Caco-2 (cell line): ENCODE measurements at regions of chr10 and their contacts with region 1.

Region 1: DNA sequence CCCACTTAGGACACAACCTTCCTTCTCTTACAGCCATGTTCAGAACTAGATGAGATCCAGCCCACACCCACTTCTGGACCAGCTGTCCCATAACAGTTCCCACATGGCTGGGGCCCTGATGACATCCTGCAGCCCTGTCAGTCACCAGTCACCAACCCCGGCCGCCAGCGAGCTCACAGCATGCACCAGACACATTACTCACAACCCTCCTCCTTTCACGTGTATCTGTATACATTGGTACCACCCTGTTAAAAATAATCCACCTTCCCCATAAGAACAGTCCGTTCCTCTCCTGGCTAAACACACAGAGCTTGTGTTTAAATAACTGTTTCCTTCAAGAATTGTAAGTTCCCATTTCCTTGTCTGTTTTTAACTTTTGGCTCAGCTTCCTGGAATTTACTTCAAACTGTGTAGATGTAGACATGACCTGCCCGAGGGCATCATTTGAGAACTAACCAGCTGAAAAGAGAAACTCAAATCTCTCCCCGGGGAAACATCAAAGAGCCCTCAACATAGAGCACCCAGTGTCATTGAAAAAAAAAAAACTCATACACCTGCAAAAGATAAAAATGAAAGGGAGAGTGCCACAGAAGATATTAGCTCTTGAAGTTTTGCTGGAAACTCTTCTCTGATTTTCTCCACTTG is 26.0 kb upstream of the PRLHR start:
- DNase-seq: no peak
- H3K4me3 ChIP-seq: no peak overlapping the region
- H3K4me3 Mint-ChIP-seq: no peak overlapping the region
- H3K27ac Mint-ChIP-seq: no peak overlapping the region
- H3K4me1 ChIP-seq: no peaks in the 10 kb centered on the region
- H3K4me1 Mint-ChIP-seq: no peaks in the 10 kb centered on the region
- H3K27me3 ChIP-seq: no peaks in the 10 kb centered on the region
- H3K27me3 Mint-ChIP-seq: peaks cover 33% of the 10 kb centered on the region
- CTCF ChIP-seq: no peak

Region 2: GRCh38 chr10:118798231-118798662 is 176.8 kb after region 1 on chr10:
- CTCF ChIA-PET with region 1: interaction called, 19 read pairs
- POLR2A ChIA-PET with region 1: no interaction called
- intact Hi-C with region 1: no loop called
- DNase-seq: no peak
- H3K4me3 ChIP-seq: no peak overlapping the region
- H3K4me3 Mint-ChIP-seq: no peak overlapping the region
- H3K27ac Mint-ChIP-seq: no peak overlapping the region
- H3K4me1 ChIP-seq: no peaks in the 10 kb centered on the region
- H3K4me1 Mint-ChIP-seq: no peaks in the 10 kb centered on the region
- H3K27me3 ChIP-seq: no peaks in the 10 kb centered on the region
- H3K27me3 Mint-ChIP-seq: peaks cover 10% of the 10 kb centered on the region
- CTCF ChIP-seq: no peak